Activated naive CD4-positive, alpha-beta T cell treated with anti-CD3 and anti-CD28 coated beads for 36 hours (primary cell): ENCODE measurements at regions of chr16 and their contacts with region 1.

Region 1: GRCh38 chr16:54929090-54930004 is 1.3 kb upstream of the IRX5 start:
- DNase-seq: peak; percentile 98
- H3K4me3 Mint-ChIP-seq: peak overlapping the region; percentile 75
- H3K27ac Mint-ChIP-seq: no peak overlapping the region
- H3K4me1 Mint-ChIP-seq: peaks cover 27% of the 10 kb centered on the region
- H3K27me3 Mint-ChIP-seq: peaks cover 65% of the 10 kb centered on the region

Region 2: DNA sequence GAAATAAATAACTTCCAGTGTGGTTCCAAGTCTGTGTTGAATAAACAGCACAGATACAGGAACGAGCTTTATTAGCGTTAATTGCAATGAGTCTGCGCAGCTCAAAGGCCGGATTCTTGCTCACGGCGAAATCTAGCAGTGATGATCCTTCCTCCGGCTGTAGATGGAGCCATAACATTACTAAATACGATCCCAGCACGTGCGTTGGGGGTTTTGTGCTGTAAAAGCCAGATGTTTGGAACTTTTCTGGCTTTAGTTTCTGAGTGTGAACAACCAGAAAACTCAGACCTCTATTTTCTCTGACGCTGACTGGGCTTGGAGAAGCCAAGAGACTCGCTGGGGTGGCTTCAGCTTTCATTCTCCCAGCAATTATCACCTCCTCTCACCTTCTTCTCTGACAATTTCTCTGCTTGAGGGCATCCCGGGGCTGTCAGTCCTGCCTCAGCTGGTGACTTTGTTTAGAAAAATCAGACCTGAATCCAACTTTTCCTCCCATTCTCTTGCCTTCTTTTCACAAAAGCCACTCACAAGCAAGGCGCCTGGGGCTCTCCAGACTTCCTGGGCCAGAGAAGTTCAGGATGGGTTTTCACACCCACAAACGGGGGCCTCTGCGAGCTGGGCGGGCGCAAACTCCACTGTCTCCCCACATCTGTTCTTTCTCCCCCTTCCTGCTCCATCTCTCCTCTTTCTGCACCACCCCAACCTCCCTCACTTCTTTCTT is 1379.2 kb before region 1 on chr16:
- CTCF ChIA-PET with region 1: no interaction called
- intact Hi-C with region 1: loop called (anchors 2 kb)
- DNase-seq: peak; percentile 72
- H3K4me3 Mint-ChIP-seq: no peak overlapping the region
- H3K27ac Mint-ChIP-seq: no peak overlapping the region
- H3K4me1 Mint-ChIP-seq: peaks cover 22% of the 10 kb centered on the region
- H3K27me3 Mint-ChIP-seq: peaks cover 38% of the 10 kb centered on the region

Region 3: DNA sequence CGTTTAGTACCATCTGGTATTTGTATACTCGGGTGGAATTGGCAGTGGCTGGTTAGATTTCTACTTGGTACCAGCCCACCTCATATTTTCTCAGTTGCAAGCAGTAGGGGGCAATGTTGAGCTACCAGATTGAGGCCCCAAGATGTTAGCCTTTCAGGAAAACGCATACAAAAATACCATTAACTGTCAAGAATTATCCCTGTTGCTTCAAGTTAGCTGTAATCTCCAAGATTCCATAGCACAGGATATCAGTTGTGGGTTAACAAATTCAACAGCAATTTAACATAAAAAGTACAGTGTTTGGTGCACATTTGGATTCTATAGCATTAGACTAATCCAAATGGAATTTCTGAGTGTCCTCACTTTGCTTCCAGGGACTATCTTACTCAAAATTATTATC is 1037.2 kb before region 1 on chr16:
- CTCF ChIA-PET with region 1: no interaction called
- intact Hi-C with region 1: loop called (anchors 2 kb)
- DNase-seq: peak; percentile 75
- H3K4me3 Mint-ChIP-seq: no peak overlapping the region
- H3K27ac Mint-ChIP-seq: no peak overlapping the region
- H3K4me1 Mint-ChIP-seq: peaks cover 9% of the 10 kb centered on the region
- H3K27me3 Mint-ChIP-seq: no peaks in the 10 kb centered on the region

Region 4: GRCh38 chr16:54193665-54194333 is 735.5 kb before region 1 on chr16:
- CTCF ChIA-PET with region 1: no interaction called
- intact Hi-C with region 1: loop called (anchors 10 kb)
- DNase-seq: peak; percentile 66
- H3K4me3 Mint-ChIP-seq: no peak overlapping the region
- H3K27ac Mint-ChIP-seq: no peak overlapping the region
- H3K4me1 Mint-ChIP-seq: no peaks in the 10 kb centered on the region
- H3K27me3 Mint-ChIP-seq: peaks cover 18% of the 10 kb centered on the region

Region 5: DNA sequence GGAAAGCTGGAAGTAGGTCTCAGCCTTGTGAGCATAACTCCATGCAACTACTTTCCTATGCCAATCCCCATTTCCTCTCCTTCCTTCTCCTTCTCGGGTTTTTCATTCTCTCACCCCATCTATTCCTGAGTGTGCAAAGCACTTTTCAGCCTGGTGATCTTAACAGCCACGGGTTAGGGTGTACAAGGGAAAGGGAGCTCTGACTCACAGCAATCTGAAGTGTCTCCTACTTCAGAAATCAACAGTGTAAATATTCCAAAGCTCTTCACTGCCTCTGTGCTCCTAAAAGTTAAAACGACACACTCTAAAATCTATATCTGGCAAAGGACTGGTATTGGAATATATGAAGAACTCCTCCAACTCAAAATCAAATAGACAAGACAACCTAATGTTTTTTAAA is 374.8 kb before region 1 on chr16:
- CTCF ChIA-PET with region 1: no interaction called
- intact Hi-C with region 1: no loop called
- DNase-seq: no peak
- H3K4me3 Mint-ChIP-seq: no peak overlapping the region
- H3K27ac Mint-ChIP-seq: no peak overlapping the region
- H3K4me1 Mint-ChIP-seq: no peaks in the 10 kb centered on the region
- H3K27me3 Mint-ChIP-seq: peaks cover 2% of the 10 kb centered on the region

Region 6: GRCh38 chr16:55035029-55035428 is 105.7 kb after region 1 on chr16:
- CTCF ChIA-PET with region 1: no interaction called
- intact Hi-C with region 1: no loop called
- DNase-seq: peak; percentile 55
- H3K4me3 Mint-ChIP-seq: no peak overlapping the region
- H3K27ac Mint-ChIP-seq: no peak overlapping the region
- H3K4me1 Mint-ChIP-seq: no peaks in the 10 kb centered on the region
- H3K27me3 Mint-ChIP-seq: peaks cover 7% of the 10 kb centered on the region

Region 7: GRCh38 chr16:55333684-55334083 is 404.3 kb after region 1 on chr16:
- CTCF ChIA-PET with region 1: no interaction called
- intact Hi-C with region 1: loop called (anchors 10 kb)
- DNase-seq: no peak
- H3K4me3 Mint-ChIP-seq: no peak overlapping the region
- H3K27ac Mint-ChIP-seq: no peak overlapping the region
- H3K4me1 Mint-ChIP-seq: peaks cover 9% of the 10 kb centered on the region
- H3K27me3 Mint-ChIP-seq: peaks cover 50% of the 10 kb centered on the region

Region 8: GRCh38 chr16:56203052-56203451 is 1273.7 kb after region 1 on chr16:
- CTCF ChIA-PET with region 1: no interaction called
- intact Hi-C with region 1: loop called (anchors 5 kb)
- DNase-seq: peak; percentile 75
- H3K4me3 Mint-ChIP-seq: no peak overlapping the region
- H3K27ac Mint-ChIP-seq: no peak overlapping the region
- H3K4me1 Mint-ChIP-seq: peaks cover 21% of the 10 kb centered on the region
- H3K27me3 Mint-ChIP-seq: peaks cover 5% of the 10 kb centered on the region